ENCODE measurements at regions of chr1 and their contacts with region 1.

Region 1: GRCh38 chr1:84944767-84945486 is 51.9 kb upstream of the LPAR3 start:
- DNase-seq: peak; percentile 82
- H3K4me3 Mint-ChIP-seq: peak overlapping the region; percentile 79
- H3K27ac Mint-ChIP-seq: peak overlapping the region; percentile 91
- H3K4me1 Mint-ChIP-seq: peaks cover 24% of the 10 kb centered on the region
- H3K27me3 Mint-ChIP-seq: peaks cover 8% of the 10 kb centered on the region

Region 2: GRCh38 chr1:84847253-84848250 is 97.4 kb before region 1 on chr1:
- CTCF ChIA-PET with region 1: no interaction called
- DNase-seq: peak; percentile 22
- H3K4me3 Mint-ChIP-seq: no peak overlapping the region
- H3K27ac Mint-ChIP-seq: no peak overlapping the region
- H3K4me1 Mint-ChIP-seq: peaks cover 14% of the 10 kb centered on the region
- H3K27me3 Mint-ChIP-seq: peaks cover 12% of the 10 kb centered on the region

Region 3: GRCh38 chr1:84959294-84959693 is 14.4 kb after region 1 on chr1:
- CTCF ChIA-PET with region 1: interaction called, 32 read pairs
- DNase-seq: peak; percentile 51
- H3K4me3 Mint-ChIP-seq: no peak overlapping the region
- H3K27ac Mint-ChIP-seq: no peak overlapping the region
- H3K4me1 Mint-ChIP-seq: peaks cover 14% of the 10 kb centered on the region
- H3K27me3 Mint-ChIP-seq: no peaks in the 10 kb centered on the region

Region 4: GRCh38 chr1:84996846-84997666 is 52.1 kb after region 1 on chr1 and contains the start of gene MCOLN2:
- CTCF ChIA-PET with region 1: interaction called, 28 read pairs
- DNase-seq: peak; percentile 69
- H3K4me3 Mint-ChIP-seq: peak within 1 kb of the TSS; percentile 83
- H3K27ac Mint-ChIP-seq: peak within 1 kb of the TSS; percentile 34
- H3K4me1 Mint-ChIP-seq: peaks cover 49% of the 10 kb centered on the region
- H3K27me3 Mint-ChIP-seq: peaks cover 41% of the 10 kb centered on the region

Region 5: GRCh38 chr1:85033221-85033620 is 88.3 kb after region 1 on chr1:
- CTCF ChIA-PET with region 1: interaction called, 108 read pairs
- DNase-seq: no peak
- H3K4me3 Mint-ChIP-seq: no peak overlapping the region
- H3K27ac Mint-ChIP-seq: no peak overlapping the region
- H3K4me1 Mint-ChIP-seq: no peaks in the 10 kb centered on the region
- H3K27me3 Mint-ChIP-seq: peaks cover 16% of the 10 kb centered on the region

Region 6: GRCh38 chr1:85078903-85079302 is 134.0 kb after region 1 on chr1:
- CTCF ChIA-PET with region 1: interaction called, 13 read pairs
- DNase-seq: no peak
- H3K4me3 Mint-ChIP-seq: no peak overlapping the region
- H3K27ac Mint-ChIP-seq: no peak overlapping the region
- H3K4me1 Mint-ChIP-seq: peaks cover 6% of the 10 kb centered on the region
- H3K27me3 Mint-ChIP-seq: peaks cover 32% of the 10 kb centered on the region

Region 7: GRCh38 chr1:85240174-85240601 is 295.3 kb after region 1 on chr1:
- CTCF ChIA-PET with region 1: interaction called, 26 read pairs
- DNase-seq: peak; percentile 28
- H3K4me3 Mint-ChIP-seq: no peak overlapping the region
- H3K27ac Mint-ChIP-seq: peak overlapping the region; percentile 68
- H3K4me1 Mint-ChIP-seq: peaks cover 21% of the 10 kb centered on the region
- H3K27me3 Mint-ChIP-seq: peaks cover 14% of the 10 kb centered on the region

Region 8: GRCh38 chr1:85276215-85276977 is 331.5 kb after region 1 on chr1 and contains the start of gene BCL10:
- CTCF ChIA-PET with region 1: interaction called, 13 read pairs
- DNase-seq: peak; percentile 98
- H3K4me3 Mint-ChIP-seq: peak within 1 kb of the TSS; percentile 81
- H3K27ac Mint-ChIP-seq: peak within 1 kb of the TSS; percentile 86
- H3K4me1 Mint-ChIP-seq: peaks cover 47% of the 10 kb centered on the region
- H3K27me3 Mint-ChIP-seq: peaks cover 20% of the 10 kb centered on the region

Measured in activated naive CD4-positive, alpha-beta T cell treated with anti-CD3 and anti-CD28 coated beads, Interleukin-2, amount 10 ng/mL, durations not matched to agents 7 days and 5 days (primary cell).